ENCODE measurements at regions of chr1 and their contacts with region 1.

Region 1: GRCh38 chr1:207077470-207078377 is 10.9 kb upstream of the C4BPB start:
- DNase-seq: peak; percentile 21 to 85 (median 78)
- ATAC-seq: peak; percentile 98
- H3K4me3 ChIP-seq: no peak overlapping the region
- H3K4me3 Mint-ChIP-seq: no peak overlapping the region
- H3K27ac ChIP-seq: no peak overlapping the region
- H3K27ac Mint-ChIP-seq: peak overlapping the region in 3 of 9 donors; percentile 5 to 63 (median 28)
- H3K4me1 ChIP-seq: no peaks in the 10 kb centered on the region
- H3K4me1 Mint-ChIP-seq: peaks cover 0 to 14% (median 5%) of the 10 kb centered on the region in 7 donors
- H3K27me3 ChIP-seq: no peaks in the 10 kb centered on the region
- H3K27me3 Mint-ChIP-seq: peaks cover 0 to 52% (median 0%) of the 10 kb centered on the region in 5 donors

Region 2: GRCh38 chr1:206430031-206430983 is 647.4 kb before region 1 on chr1:
- CTCF ChIA-PET with region 1: no interaction called
- POLR2A ChIA-PET with region 1: no interaction called
- intact Hi-C with region 1: no loop called
- DNase-seq: no peak
- ATAC-seq: no peak
- H3K4me3 ChIP-seq: no peak overlapping the region
- H3K4me3 Mint-ChIP-seq: no peak overlapping the region
- H3K27ac ChIP-seq: no peak overlapping the region
- H3K27ac Mint-ChIP-seq: no peak overlapping the region
- H3K4me1 ChIP-seq: no peaks in the 10 kb centered on the region
- H3K4me1 Mint-ChIP-seq: peaks cover 0 to 22% (median 0%) of the 10 kb centered on the region in 7 donors
- H3K27me3 ChIP-seq: no peaks in the 10 kb centered on the region
- H3K27me3 Mint-ChIP-seq: no peaks in the 10 kb centered on the region

Region 3: DNA sequence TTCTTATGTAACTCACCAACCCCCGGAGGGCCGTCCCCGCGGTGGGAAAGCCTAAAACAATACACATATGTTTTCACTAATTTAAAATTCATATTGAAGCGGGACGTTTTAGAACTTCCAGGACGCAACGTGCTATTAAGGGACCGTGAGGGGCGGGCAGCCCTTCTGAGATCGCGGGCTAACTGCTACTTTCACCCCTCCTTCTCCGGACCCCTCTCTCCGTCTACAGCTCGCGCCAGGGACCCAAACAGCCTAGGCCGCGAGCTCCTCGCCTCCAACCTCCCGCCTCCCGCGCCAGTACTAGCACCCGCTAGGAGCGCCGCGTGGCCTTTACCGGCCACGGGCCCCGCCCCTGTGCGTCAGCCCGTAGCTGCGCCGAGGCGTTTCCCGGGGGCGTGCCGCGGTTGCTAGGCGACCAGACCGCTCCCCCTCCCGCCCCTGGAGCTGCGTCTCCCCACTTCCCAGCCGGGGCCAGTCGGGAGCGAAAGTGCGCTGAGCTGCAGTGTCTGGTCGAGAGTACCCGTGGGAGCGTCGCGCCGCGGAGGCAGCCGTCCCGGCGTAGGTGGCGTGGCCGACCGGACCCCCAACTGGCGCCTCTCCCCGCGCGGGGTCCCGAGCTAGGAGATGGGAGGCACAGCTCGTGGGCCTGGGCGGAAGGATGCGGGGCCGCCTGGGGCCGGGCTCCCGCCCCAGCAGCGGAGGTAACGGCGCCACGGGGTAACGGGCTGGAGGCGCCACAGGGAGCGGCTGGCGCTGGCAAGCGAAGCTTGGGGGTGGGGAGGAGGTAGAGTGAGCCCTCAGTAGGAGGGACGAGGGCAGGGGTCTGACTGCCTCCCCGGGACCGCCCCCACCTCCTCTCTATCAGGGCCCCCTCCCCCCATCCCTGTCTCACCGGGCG is 442.4 kb before region 1 on chr1 and contains the start of gene DYRK3:
- CTCF ChIA-PET with region 1: no interaction called
- POLR2A ChIA-PET with region 1: no interaction called
- intact Hi-C with region 1: loop called in 1 of 2 experiments (anchors 1 kb)
- DNase-seq: peak; percentile 71 to 98 (median 80)
- ATAC-seq: peak; percentile 97
- H3K4me3 ChIP-seq: peak within 1 kb of the TSS; percentile 67
- H3K4me3 Mint-ChIP-seq: peak within 1 kb of the TSS; percentile 85 to 96 (median 90)
- H3K27ac ChIP-seq: peak within 1 kb of the TSS; percentile 57
- H3K27ac Mint-ChIP-seq: peak within 1 kb of the TSS; percentile 64 to 93 (median 85)
- H3K4me1 ChIP-seq: peaks cover 8 to 16% of the 10 kb centered on the region in 2 donors
- H3K4me1 Mint-ChIP-seq: peaks cover 14 to 29% (median 18%) of the 10 kb centered on the region in 7 donors
- H3K27me3 ChIP-seq: no peaks in the 10 kb centered on the region
- H3K27me3 Mint-ChIP-seq: peaks cover 7 to 13% (median 9%) of the 10 kb centered on the region in 5 donors
- total RNA-seq, gene DYRK3: 0.22 to 8.2 (median 0.69) TPM

Region 4: DNA sequence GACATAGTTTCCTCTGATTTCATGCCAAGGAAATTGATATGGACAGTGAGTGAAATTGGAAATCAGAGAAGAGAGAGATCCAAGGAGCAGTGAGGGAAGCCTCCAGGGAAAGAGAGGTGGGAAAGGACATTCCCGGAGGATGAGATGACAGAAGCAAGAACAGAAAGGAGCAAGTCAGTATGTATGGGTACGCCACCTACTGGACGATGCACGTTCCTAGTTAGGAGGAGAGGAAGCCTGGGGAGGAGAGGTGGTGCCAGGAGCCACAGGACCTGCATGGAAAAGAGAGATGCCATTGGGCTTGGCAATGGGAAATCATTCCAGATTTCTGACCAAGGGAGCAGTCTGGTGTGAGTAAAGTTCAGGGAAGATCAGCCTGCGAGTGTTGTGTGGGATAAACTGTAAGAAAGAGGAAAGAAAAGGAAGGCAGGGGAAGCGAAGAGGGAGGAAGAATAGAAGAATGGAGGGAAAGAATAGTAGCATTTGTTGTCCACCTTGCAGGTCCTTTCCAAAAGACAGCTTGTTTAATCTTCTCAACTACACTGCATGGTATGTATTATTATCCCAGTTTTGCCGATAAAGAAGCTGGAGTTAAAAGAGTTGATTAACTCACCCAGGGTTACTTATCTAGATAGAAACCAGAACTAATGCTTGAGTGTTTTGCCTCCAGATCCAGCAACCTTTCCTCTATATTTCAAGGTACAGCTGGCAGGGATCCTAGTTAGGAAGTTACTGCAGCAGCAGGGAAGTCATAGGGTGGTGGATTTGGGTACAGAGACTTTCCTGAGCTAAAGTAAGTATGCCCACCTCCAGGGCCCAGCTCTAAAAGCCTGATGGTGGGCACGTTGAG is 72.5 kb before region 1 on chr1:
- CTCF ChIA-PET with region 1: no interaction called
- POLR2A ChIA-PET with region 1: no interaction called
- intact Hi-C with region 1: loop called (anchors 2 to 5 kb)
- DNase-seq: peak in 5 of 9 donors; percentile 7 to 28 (median 22)
- ATAC-seq: peak; percentile 67
- H3K4me3 ChIP-seq: no peak overlapping the region
- H3K4me3 Mint-ChIP-seq: peak overlapping the region in 1 of 10 donors; percentile 53
- H3K27ac ChIP-seq: no peak overlapping the region
- H3K27ac Mint-ChIP-seq: peak overlapping the region in 1 of 9 donors; percentile 36
- H3K4me1 ChIP-seq: no peaks in the 10 kb centered on the region
- H3K4me1 Mint-ChIP-seq: peaks cover 0 to 8% (median 4%) of the 10 kb centered on the region in 7 donors
- H3K27me3 ChIP-seq: no peaks in the 10 kb centered on the region
- H3K27me3 Mint-ChIP-seq: peaks cover 0 to 26% (median 6%) of the 10 kb centered on the region in 5 donors

Region 5: DNA sequence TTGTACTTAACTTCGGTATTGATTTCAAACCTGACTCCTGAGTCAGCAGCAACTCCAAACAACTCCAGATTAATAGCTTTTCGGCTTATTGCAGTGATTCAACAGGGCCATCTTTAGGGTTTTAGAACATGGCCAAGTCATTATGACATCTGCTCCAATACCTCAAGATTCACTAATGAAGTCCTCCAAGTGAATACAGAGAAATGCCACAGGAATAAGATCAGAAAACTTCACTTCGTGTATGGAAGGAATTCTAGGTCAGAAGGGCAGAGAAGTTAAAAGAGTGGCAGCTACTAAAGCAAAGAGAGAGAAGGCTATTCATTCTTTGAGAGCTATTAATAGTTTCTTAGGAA is 37.6 kb before region 1 on chr1:
- CTCF ChIA-PET with region 1: no interaction called
- POLR2A ChIA-PET with region 1: no interaction called
- intact Hi-C with region 1: loop called in 1 of 2 experiments (anchors 5 kb)
- DNase-seq: no peak
- ATAC-seq: no peak
- H3K4me3 ChIP-seq: no peak overlapping the region
- H3K4me3 Mint-ChIP-seq: no peak overlapping the region
- H3K27ac ChIP-seq: no peak overlapping the region
- H3K27ac Mint-ChIP-seq: no peak overlapping the region
- H3K4me1 ChIP-seq: no peaks in the 10 kb centered on the region
- H3K4me1 Mint-ChIP-seq: peaks cover 8 to 35% (median 31%) of the 10 kb centered on the region in 7 donors
- H3K27me3 ChIP-seq: no peaks in the 10 kb centered on the region
- H3K27me3 Mint-ChIP-seq: peaks cover 3 to 6% (median 3%) of the 10 kb centered on the region in 5 donors